AG04449 (cell line): ENCODE measurements at regions of chr1 and their contacts with region 1.

Region 1: GRCh38 chr1:160006312-160006940 is 25.4 kb downstream of the PIGM start:
- DNase-seq: no peak
- H3K4me3 ChIP-seq: no peak overlapping the region
- CTCF ChIP-seq: peak; percentile 94

Region 2: GRCh38 chr1:159780583-159781582 is 225.5 kb before region 1 on chr1 and contains the start of gene DUSP23:
- CTCF ChIA-PET with region 1: interaction called, 22 read pairs
- POLR2A ChIA-PET with region 1: no interaction called
- DNase-seq: peak; percentile 92
- H3K4me3 ChIP-seq: peak within 1 kb of the TSS; percentile 85
- CTCF ChIP-seq: peak; percentile 96

Region 3: GRCh38 chr1:159900086-159900680 is 106.2 kb before region 1 on chr1 and contains the start of gene CFAP45:
- CTCF ChIA-PET with region 1: interaction called, 206 read pairs
- POLR2A ChIA-PET with region 1: no interaction called
- DNase-seq: no peak
- H3K4me3 ChIP-seq: no peak within 1 kb of the TSS
- CTCF ChIP-seq: no peak

Region 4: GRCh38 chr1:159945483-159946241 is 60.8 kb before region 1 on chr1 and contains the start of gene IGSF9:
- CTCF ChIA-PET with region 1: interaction called, 1,031 read pairs
- POLR2A ChIA-PET with region 1: no interaction called
- DNase-seq: no peak
- H3K4me3 ChIP-seq: peak within 1 kb of the TSS; percentile 53
- CTCF ChIP-seq: peak; percentile 69

Region 5: GRCh38 chr1:159979257-159979656 is 27.2 kb before region 1 on chr1:
- CTCF ChIA-PET with region 1: interaction called, 24 read pairs
- POLR2A ChIA-PET with region 1: interaction called, 3 read pairs
- DNase-seq: no peak
- H3K4me3 ChIP-seq: no peak overlapping the region
- CTCF ChIP-seq: no peak

Region 6: GRCh38 chr1:160018900-160019299 is 12.5 kb after region 1 on chr1:
- CTCF ChIA-PET with region 1: interaction called, 152 read pairs
- POLR2A ChIA-PET with region 1: no interaction called
- DNase-seq: no peak
- H3K4me3 ChIP-seq: no peak overlapping the region
- CTCF ChIP-seq: no peak

Region 7: GRCh38 chr1:160251687-160252526 is 245.5 kb after region 1 on chr1:
- CTCF ChIA-PET with region 1: no interaction called
- POLR2A ChIA-PET with region 1: no interaction called
- DNase-seq: no peak
- H3K4me3 ChIP-seq: no peak overlapping the region
- CTCF ChIP-seq: peak; percentile 54